Common myeloid progenitor, CD34-positive (primary cell): ENCODE measurements at regions of chr16 and their contacts with region 1.

Region 1: DNA sequence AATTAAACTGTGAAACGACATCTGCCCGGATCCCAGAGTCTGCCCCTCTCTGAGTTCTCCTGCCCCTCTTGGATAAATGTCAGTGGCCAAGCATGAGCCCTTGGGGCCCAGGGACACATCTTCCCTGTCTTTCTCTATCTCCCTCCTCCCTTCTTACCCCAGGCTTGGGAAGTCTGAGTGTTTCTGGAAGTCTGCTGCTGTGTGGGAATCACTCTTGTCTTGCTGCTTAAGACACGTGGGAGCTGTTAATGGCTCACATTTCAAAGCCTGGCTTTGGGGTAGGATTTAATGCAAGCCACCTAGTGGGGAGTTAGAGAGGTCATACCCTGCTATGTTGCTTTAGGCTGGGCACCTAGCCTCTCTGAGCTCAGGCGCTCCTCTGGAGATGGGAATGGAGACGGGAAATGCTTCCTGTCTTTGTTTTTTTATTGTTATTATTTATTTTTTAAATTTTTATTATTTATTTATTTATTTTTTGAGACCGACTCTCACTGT is 218.5 kb upstream of the CIBAR2 start:
- DNase-seq: peak in 2 of 3 donors; percentile 76 to 78
- H3K4me3 ChIP-seq: no peak overlapping the region
- H3K27ac ChIP-seq: no peak overlapping the region
- H3K4me1 ChIP-seq: peaks cover 0 to 64% (median 59%) of the 10 kb centered on the region in 4 experiments
- H3K27me3 ChIP-seq: no peaks in the 10 kb centered on the region

Region 2: DNA sequence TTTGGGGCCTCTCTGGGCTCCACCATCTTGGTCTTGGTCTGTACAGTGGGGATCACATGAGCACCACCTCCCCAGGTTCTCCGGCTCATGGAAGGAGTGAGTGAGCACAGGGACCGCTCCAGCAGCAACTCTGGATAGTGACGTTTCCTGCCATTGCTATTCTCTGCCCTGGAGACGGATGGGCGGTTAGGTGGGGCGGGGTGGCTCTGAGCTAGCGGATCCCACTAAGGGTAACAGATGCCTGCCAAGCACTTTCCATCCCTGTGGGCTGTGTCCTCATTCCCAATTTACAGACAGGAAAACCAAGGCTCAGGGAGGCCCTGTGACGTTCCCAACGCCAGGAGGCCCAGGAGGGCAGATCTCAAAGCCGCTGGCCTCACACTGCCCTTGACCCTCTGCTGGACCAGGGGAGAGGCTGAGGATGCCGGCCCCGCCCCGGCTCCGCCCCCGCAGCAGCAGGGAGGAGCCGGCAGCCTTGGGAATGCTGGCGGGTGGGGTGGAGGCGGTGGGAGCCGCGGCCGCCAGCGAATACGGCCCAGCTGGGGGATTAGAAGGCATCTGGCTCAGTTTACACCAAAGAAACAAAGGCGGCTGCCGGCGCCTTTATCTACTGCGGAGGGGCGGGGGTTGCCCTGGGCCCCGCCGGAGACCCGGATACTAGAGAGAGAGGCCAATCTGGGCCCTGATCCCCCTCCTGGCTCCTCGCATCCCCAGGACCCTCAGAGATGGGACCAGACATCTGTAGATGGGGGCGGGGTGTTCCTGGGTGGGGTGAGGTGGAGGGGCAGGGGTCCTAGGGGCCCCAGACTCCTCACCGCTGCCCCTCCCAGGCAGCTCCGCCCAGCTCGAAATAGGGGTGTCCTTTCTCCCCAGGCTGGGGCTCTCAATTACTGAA is 96.2 kb before region 1 on chr16:
- CTCF ChIA-PET with region 1: no interaction called
- POLR2A ChIA-PET with region 1: no interaction called
- DNase-seq: no peak
- H3K4me3 ChIP-seq: peak overlapping the region in 2 of 7 experiments; percentile 2 to 13
- H3K27ac ChIP-seq: no peak overlapping the region
- H3K4me1 ChIP-seq: peaks cover 0 to 33% (median 23%) of the 10 kb centered on the region in 4 experiments
- H3K27me3 ChIP-seq: no peaks in the 10 kb centered on the region

Region 3: DNA sequence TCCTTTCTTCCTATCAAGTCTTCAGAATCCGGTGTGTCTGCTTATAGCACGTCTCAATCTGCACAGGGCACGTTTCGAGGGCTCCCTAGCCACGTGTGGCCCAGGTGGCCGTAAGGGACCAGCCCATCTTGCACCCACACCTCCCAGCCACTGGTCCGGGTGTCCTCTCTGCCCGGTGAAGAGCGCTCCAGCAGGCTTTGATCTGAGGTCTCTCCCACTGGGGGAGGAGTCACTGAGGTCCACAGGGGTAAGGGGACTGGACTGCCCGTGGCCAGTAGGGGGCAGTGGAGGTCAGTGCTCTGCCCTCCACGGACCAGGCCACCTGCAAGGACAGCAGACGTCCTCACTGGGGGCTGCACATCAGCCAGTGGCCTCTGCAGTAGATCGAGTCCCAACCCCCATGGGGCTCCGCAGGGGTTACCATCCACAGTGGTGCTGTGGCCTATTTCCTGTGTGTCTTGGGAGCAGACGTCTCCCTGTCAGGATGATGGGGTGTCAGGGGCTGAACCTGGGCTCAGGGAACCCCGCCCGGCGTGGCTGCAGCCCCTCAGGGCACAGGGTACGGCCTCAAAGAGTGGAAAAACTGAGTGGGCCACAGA is 14.3 kb before region 1 on chr16:
- CTCF ChIA-PET with region 1: interaction called, 27 read pairs
- POLR2A ChIA-PET with region 1: interaction called, 8 read pairs
- DNase-seq: peak; percentile 70 to 84 (median 80)
- H3K4me3 ChIP-seq: no peak overlapping the region
- H3K27ac ChIP-seq: no peak overlapping the region
- H3K4me1 ChIP-seq: peaks cover 3 to 54% (median 42%) of the 10 kb centered on the region in 4 experiments
- H3K27me3 ChIP-seq: no peaks in the 10 kb centered on the region

Region 4: GRCh38 chr16:85347213-85347591 is 16.5 kb after region 1 on chr16:
- CTCF ChIA-PET with region 1: interaction called, 13 read pairs
- POLR2A ChIA-PET with region 1: no interaction called
- DNase-seq: peak; percentile 59 to 71 (median 69)
- H3K4me3 ChIP-seq: no peak overlapping the region
- H3K27ac ChIP-seq: no peak overlapping the region
- H3K4me1 ChIP-seq: peaks cover 0 to 9% (median 0%) of the 10 kb centered on the region in 4 experiments
- H3K27me3 ChIP-seq: peaks cover 0 to 3% (median 0%) of the 10 kb centered on the region in 5 experiments

Region 5: GRCh38 chr16:85360323-85361277 is 29.9 kb after region 1 on chr16:
- CTCF ChIA-PET with region 1: no interaction called
- POLR2A ChIA-PET with region 1: no interaction called
- DNase-seq: peak in 2 of 3 donors; percentile 26 to 52
- H3K4me3 ChIP-seq: no peak overlapping the region
- H3K27ac ChIP-seq: no peak overlapping the region
- H3K4me1 ChIP-seq: peaks cover 0 to 6% (median 3%) of the 10 kb centered on the region in 4 experiments
- H3K27me3 ChIP-seq: no peaks in the 10 kb centered on the region